ENCODE measurements at regions of chr6 and their contacts with region 1.

Region 1: GRCh38 chr6:39309942-39310531 is 4.2 kb downstream of the KCNK17 start:
- DNase-seq: peak; percentile 22 to 53 (median 35)
- H3K4me3 ChIP-seq: no peak overlapping the region
- H3K4me3 Mint-ChIP-seq: no peak overlapping the region
- H3K27ac ChIP-seq: no peak overlapping the region
- H3K27ac Mint-ChIP-seq: no peak overlapping the region
- H3K4me1 ChIP-seq: no peaks in the 10 kb centered on the region
- H3K4me1 Mint-ChIP-seq: peaks cover 0 to 13% (median 2%) of the 10 kb centered on the region in 4 donors
- H3K27me3 ChIP-seq: peaks cover 14% of the 10 kb centered on the region
- H3K27me3 Mint-ChIP-seq: peaks cover 20 to 24% of the 10 kb centered on the region in 2 donors

Region 2: DNA sequence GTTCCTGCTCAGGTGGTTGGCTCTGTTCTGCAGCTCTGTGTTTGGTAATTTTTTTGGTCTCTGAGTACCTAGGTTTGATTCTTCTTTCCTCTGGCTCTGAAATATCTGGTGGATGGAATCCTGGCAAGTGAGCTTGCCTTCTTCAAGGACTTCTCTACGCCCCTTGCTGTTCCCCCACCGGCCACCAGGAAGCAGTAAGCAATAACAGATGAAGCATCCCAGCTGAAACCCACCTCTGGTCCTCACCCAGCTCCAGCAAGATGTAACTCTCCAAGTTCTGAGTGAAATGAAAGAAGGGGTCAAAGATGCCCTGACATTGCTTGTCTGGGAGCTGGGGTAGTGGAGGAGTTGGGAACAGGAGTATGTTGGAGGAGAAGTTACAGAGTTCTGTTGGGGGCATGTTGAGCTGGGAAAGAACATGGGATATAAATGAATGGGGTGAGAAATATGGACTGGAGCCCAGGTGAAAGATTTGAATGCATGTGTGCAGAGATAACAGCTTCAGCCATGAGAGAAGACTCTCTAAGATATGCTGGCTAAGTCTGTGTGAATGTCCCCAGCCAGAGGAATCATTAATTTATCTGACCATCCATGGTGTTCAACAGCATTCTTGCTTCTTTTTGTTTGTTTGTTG is 312.8 kb before region 1 on chr6:
- CTCF ChIA-PET with region 1: interaction called, 16 read pairs
- POLR2A ChIA-PET with region 1: no interaction called
- intact Hi-C with region 1: no loop called
- DNase-seq: peak in 1 of 5 donors; percentile 14
- H3K4me3 ChIP-seq: no peak overlapping the region
- H3K4me3 Mint-ChIP-seq: no peak overlapping the region
- H3K27ac ChIP-seq: no peak overlapping the region
- H3K27ac Mint-ChIP-seq: no peak overlapping the region
- H3K4me1 ChIP-seq: no peaks in the 10 kb centered on the region
- H3K4me1 Mint-ChIP-seq: no peaks in the 10 kb centered on the region
- H3K27me3 ChIP-seq: no peaks in the 10 kb centered on the region
- H3K27me3 Mint-ChIP-seq: peaks cover 14 to 43% of the 10 kb centered on the region in 2 donors

Region 3: GRCh38 chr6:39166189-39166911 is 143.7 kb before region 1 on chr6:
- CTCF ChIA-PET with region 1: interaction called, 248 read pairs
- POLR2A ChIA-PET with region 1: no interaction called
- intact Hi-C with region 1: loop called (anchors 1 kb)
- DNase-seq: peak; percentile 60 to 72 (median 62)
- H3K4me3 ChIP-seq: no peak overlapping the region
- H3K4me3 Mint-ChIP-seq: peak overlapping the region in 2 of 8 donors; percentile 58
- H3K27ac ChIP-seq: no peak overlapping the region
- H3K27ac Mint-ChIP-seq: no peak overlapping the region
- H3K4me1 ChIP-seq: peaks cover 4% of the 10 kb centered on the region
- H3K4me1 Mint-ChIP-seq: peaks cover 0 to 4% (median 2%) of the 10 kb centered on the region in 4 donors
- H3K27me3 ChIP-seq: no peaks in the 10 kb centered on the region
- H3K27me3 Mint-ChIP-seq: no peaks in the 10 kb centered on the region